ENCODE measurements at regions of chr22 and their contacts with region 1.

Region 1: GRCh38 chr22:25081409-25081824 is 118.2 kb upstream of the CRYBB3 start:
- DNase-seq: peak; percentile 76
- ATAC-seq: no peak
- H3K4me3 Mint-ChIP-seq: no peak overlapping the region
- H3K27ac Mint-ChIP-seq: peak overlapping the region; percentile 70
- H3K4me1 Mint-ChIP-seq: peaks cover 76% of the 10 kb centered on the region
- H3K27me3 Mint-ChIP-seq: no peaks in the 10 kb centered on the region

Region 2: GRCh38 chr22:24707470-24707801 is 374.0 kb before region 1 on chr22:
- CTCF ChIA-PET with region 1: no interaction called
- POLR2A ChIA-PET with region 1: no interaction called
- intact Hi-C with region 1: no loop called
- DNase-seq: no peak
- ATAC-seq: no peak
- H3K4me3 Mint-ChIP-seq: no peak overlapping the region
- H3K27ac Mint-ChIP-seq: no peak overlapping the region
- H3K4me1 Mint-ChIP-seq: no peaks in the 10 kb centered on the region
- H3K27me3 Mint-ChIP-seq: peaks cover 5% of the 10 kb centered on the region

Region 3: GRCh38 chr22:24951942-24952836 is 129.2 kb before region 1 on chr22 and contains the start of gene KIAA1671:
- CTCF ChIA-PET with region 1: no interaction called
- POLR2A ChIA-PET with region 1: no interaction called
- intact Hi-C with region 1: loop called in 1 of 2 experiments (anchors 1 kb)
- DNase-seq: peak; percentile 91
- ATAC-seq: peak; percentile 97
- H3K4me3 Mint-ChIP-seq: peak within 1 kb of the TSS; percentile 75
- H3K27ac Mint-ChIP-seq: no peak within 1 kb of the TSS
- H3K4me1 Mint-ChIP-seq: peaks cover 10% of the 10 kb centered on the region
- H3K27me3 Mint-ChIP-seq: peaks cover 47% of the 10 kb centered on the region
- total RNA-seq, gene KIAA1671: 12.3 to 14.0 TPM

Region 4: GRCh38 chr22:25067851-25068421 is 13.5 kb before region 1 on chr22:
- CTCF ChIA-PET with region 1: interaction called, 7 read pairs
- POLR2A ChIA-PET with region 1: interaction called, 10 read pairs
- intact Hi-C with region 1: loop called (anchors 1 to 2 kb)
- DNase-seq: peak; percentile 90
- ATAC-seq: peak; percentile 74
- H3K4me3 Mint-ChIP-seq: peak overlapping the region; percentile 78
- H3K27ac Mint-ChIP-seq: peak overlapping the region; percentile 93
- H3K4me1 Mint-ChIP-seq: peaks cover 88% of the 10 kb centered on the region
- H3K27me3 Mint-ChIP-seq: no peaks in the 10 kb centered on the region

Region 5: DNA sequence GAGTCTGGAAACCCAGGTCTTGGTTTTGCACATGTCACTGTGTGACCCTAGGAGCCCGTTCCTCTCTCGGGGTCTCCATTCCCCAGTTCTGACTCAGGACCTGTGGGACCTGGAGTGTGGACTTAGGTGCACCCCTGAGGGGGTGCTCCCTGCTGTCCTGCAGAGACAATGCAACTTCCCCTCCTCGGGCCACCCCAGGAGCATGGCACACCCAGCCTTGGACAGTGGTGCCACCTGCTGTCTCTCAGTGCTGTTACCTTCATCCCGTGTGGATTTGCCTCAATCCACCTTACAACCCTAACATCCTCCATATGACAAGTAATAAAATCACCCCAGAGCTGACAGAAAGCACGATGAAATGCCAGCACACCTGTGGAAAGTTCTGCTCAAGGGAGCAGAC is 90.7 kb after region 1 on chr22:
- CTCF ChIA-PET with region 1: interaction called, 4 read pairs
- POLR2A ChIA-PET with region 1: no interaction called
- intact Hi-C with region 1: loop called (anchors 1 to 5 kb)
- DNase-seq: peak; percentile 71
- ATAC-seq: peak; percentile 83
- H3K4me3 Mint-ChIP-seq: no peak overlapping the region
- H3K27ac Mint-ChIP-seq: no peak overlapping the region
- H3K4me1 Mint-ChIP-seq: no peaks in the 10 kb centered on the region
- H3K27me3 Mint-ChIP-seq: no peaks in the 10 kb centered on the region

Region 6: DNA sequence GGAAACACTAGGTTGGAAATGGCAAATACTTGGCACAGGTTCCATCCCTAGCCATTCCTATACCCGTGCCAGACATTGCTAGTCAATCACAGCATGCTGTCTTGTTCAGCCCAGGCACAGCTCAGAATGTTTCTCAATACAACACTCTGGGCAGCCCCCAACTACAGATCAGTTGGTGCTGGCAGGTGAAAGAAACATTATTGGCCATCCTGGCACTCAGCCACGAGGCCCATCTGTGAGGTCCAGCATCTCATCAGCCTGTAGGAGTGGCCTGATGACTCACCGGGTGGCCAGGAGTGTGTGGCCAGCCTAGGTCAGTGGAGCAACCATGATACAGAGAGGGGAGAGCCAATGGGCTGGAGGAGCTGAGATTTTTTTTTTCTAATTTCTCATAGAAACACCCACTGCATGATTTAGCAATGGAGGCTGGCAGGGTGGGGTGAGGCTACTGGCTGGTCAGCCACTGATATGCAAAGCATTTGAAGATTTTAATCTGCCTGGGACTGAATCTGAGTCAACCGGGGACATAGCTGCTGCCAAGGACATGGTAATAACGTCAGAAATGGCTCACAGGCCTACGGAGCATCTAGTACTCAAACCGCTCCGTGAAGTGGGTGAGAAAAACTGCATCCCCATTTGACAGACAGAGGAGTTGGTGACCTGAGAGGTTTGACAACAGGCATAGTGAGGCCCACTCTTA is 666.0 kb after region 1 on chr22:
- CTCF ChIA-PET with region 1: no interaction called
- POLR2A ChIA-PET with region 1: no interaction called
- intact Hi-C with region 1: loop called in 1 of 2 experiments (anchors 10 kb)
- DNase-seq: no peak
- ATAC-seq: no peak
- H3K4me3 Mint-ChIP-seq: no peak overlapping the region
- H3K27ac Mint-ChIP-seq: no peak overlapping the region
- H3K4me1 Mint-ChIP-seq: peaks cover 38% of the 10 kb centered on the region
- H3K27me3 Mint-ChIP-seq: peaks cover 14% of the 10 kb centered on the region